Ovary (tissue), 10 donors: ENCODE measurements at regions of chr16 and their contacts with region 1.

Region 1: DNA sequence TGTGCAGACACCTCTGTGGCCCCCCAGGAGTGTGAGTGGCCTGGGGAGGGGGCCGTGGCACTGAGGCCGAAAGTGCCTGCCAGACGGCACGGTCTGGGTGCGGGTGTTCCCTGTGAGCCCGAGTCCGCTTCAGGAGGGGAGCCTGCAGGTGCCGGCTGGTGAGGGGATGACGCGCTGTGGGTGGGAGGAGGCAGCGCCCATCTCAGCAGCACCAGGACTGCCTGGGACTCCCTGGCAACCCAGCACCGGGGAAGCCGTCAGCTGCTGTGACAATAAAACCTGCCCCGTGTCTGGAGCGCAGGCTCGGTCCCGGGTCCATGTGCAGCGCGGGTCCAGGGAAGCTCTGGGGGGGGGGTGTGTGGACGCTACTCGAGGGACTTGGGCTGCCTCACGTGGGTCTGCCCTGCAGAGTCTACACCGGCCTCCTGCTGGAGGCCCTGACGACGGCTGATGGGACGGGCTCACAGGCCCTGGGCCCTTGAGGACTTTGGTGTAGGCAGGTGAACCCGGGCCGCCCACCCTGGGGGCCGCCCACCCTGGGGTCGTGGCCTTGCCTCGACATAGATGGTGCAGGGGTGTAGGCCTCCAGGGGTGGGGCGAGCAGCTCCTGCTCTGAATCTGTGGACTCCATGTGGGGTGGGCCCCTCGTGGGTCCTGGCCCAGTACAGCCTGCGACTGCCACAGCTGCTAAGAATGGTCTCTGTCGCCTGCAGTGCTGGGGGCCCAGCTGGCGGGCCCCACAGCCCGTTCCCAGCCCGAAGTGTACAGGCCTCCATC is 5.9 kb upstream of the RAB40C start:
- DNase-seq: peak in 4 of 5 donors; percentile 30 to 56 (median 36)
- H3K4me3 ChIP-seq: no peak overlapping the region
- H3K27ac ChIP-seq: no peak overlapping the region
- H3K4me1 ChIP-seq: peaks cover 6% of the 10 kb centered on the region
- H3K27me3 ChIP-seq: no peaks in the 10 kb centered on the region
- CTCF ChIP-seq: no peak
- EP300 ChIP-seq: no peak
- POLR2A ChIP-seq: no peak

Region 2: GRCh38 chr16:212999-213398 is 371.0 kb before region 1 on chr16:
- intact Hi-C with region 1: no loop called
- DNase-seq: no peak
- H3K4me3 ChIP-seq: no peak overlapping the region
- H3K27ac ChIP-seq: no peak overlapping the region
- H3K4me1 ChIP-seq: no peaks in the 10 kb centered on the region
- H3K27me3 ChIP-seq: no peaks in the 10 kb centered on the region
- CTCF ChIP-seq: no peak
- EP300 ChIP-seq: no peak
- POLR2A ChIP-seq: no peak

Region 3: GRCh38 chr16:641302-642188 is 57.5 kb after region 1 on chr16 and contains the start of gene MCRIP2:
- intact Hi-C with region 1: loop called in 1 of 4 experiments (anchors 5 kb)
- DNase-seq: peak; percentile 85 to 92 (median 90)
- H3K4me3 ChIP-seq: peak within 1 kb of the TSS; percentile 73
- H3K27ac ChIP-seq: peak within 1 kb of the TSS; percentile 64 to 82
- H3K4me1 ChIP-seq: peaks cover 17% of the 10 kb centered on the region
- H3K27me3 ChIP-seq: no peaks in the 10 kb centered on the region
- CTCF ChIP-seq: no peak
- EP300 ChIP-seq: no peak
- POLR2A ChIP-seq: no peak
- total RNA-seq, gene MCRIP2: 21.5 to 42.3 (median 31.3) TPM

Region 4: DNA sequence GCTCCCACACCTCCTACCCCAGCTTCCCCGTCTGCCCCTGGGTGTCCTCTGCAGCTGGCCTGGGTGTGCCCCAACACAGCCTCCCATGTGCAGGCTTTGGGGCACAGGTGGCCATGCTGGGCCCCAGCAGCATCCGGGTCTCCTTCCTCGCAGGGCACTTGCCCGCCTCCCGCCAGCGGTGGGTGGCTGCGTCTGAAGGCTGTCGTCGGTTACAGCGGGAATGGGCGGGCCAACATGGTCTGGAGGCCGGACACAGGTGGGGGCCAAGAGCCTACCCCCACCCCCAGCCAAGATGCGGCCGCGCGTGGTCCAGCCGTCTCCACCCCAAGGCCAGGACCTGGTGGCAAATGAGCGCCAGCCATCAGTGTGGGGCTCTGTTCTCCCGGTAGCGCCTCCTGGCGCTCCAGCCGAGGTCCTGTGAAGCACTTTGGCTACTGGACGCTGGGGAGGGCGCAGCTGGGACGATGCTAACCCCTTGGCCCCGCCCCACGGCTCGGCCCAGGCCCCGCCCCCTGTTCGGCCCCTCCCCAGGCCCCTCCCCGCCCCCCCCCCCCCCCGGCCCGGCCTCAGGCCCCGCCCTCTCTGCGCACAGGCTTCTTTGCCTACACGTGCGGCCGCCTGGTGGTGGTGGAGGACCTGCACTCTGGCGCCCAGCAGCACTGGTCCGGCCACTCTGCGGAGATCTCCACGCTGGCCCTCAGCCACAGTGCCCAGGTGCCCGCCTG is 76.6 kb after region 1 on chr16:
- intact Hi-C with region 1: loop called in 2 of 4 experiments (anchors 5 kb)
- DNase-seq: peak; percentile 88 to 95 (median 91)
- H3K4me3 ChIP-seq: no peak overlapping the region
- H3K27ac ChIP-seq: peak overlapping the region; percentile 66 to 74
- H3K4me1 ChIP-seq: peaks cover 5% of the 10 kb centered on the region
- H3K27me3 ChIP-seq: no peaks in the 10 kb centered on the region
- CTCF ChIP-seq: peak; percentile 35 to 75 (median 73)
- EP300 ChIP-seq: no peak
- POLR2A ChIP-seq: no peak